A549 (cell line): ENCODE measurements at regions of chr19 and their contacts with region 1.

Region 1: GRCh38 chr19:38647368-38647965 is at the start of gene ACTN4:
- DNase-seq: peak; percentile 99
- ATAC-seq: peak; percentile 65 to 68
- H3K4me3 ChIP-seq: peak within 1 kb of the TSS; percentile 85
- H3K27ac ChIP-seq: peak within 1 kb of the TSS; percentile 87 to 91
- H3K4me1 ChIP-seq: peaks cover 38% of the 10 kb centered on the region
- CTCF ChIP-seq: no peak
- EP300 ChIP-seq: no peak; a peak in 1 of 5 replicates
- POLR2A ChIP-seq: peak; percentile 100
- RAD21 ChIP-seq: peak in 1 of 2 experiments; percentile 50; a peak in 2 of 5 replicates
- polyA plus RNA-seq, gene ACTN4: 605 and 614 TPM in 2 replicates

Region 2: GRCh38 chr19:38618590-38619360 is 28.7 kb before region 1 on chr19 and contains the start of gene EIF3K:
- CTCF ChIA-PET with region 1: interaction called, 7 read pairs
- POLR2A ChIA-PET with region 1: interaction called, 28 read pairs
- DNase-seq: peak; percentile 100
- ATAC-seq: peak; percentile 87 to 93
- H3K4me3 ChIP-seq: peak within 1 kb of the TSS; percentile 86
- H3K27ac ChIP-seq: peak within 1 kb of the TSS; percentile 84 to 87
- H3K4me1 ChIP-seq: peaks cover 14% of the 10 kb centered on the region
- CTCF ChIP-seq: no peak
- EP300 ChIP-seq: no peak
- POLR2A ChIP-seq: peak; percentile 85
- RAD21 ChIP-seq: peak in 1 of 2 experiments; percentile 10; a peak in 1 of 5 replicates
- polyA plus RNA-seq, gene EIF3K: 419 and 491 TPM in 2 replicates

Region 3: DNA sequence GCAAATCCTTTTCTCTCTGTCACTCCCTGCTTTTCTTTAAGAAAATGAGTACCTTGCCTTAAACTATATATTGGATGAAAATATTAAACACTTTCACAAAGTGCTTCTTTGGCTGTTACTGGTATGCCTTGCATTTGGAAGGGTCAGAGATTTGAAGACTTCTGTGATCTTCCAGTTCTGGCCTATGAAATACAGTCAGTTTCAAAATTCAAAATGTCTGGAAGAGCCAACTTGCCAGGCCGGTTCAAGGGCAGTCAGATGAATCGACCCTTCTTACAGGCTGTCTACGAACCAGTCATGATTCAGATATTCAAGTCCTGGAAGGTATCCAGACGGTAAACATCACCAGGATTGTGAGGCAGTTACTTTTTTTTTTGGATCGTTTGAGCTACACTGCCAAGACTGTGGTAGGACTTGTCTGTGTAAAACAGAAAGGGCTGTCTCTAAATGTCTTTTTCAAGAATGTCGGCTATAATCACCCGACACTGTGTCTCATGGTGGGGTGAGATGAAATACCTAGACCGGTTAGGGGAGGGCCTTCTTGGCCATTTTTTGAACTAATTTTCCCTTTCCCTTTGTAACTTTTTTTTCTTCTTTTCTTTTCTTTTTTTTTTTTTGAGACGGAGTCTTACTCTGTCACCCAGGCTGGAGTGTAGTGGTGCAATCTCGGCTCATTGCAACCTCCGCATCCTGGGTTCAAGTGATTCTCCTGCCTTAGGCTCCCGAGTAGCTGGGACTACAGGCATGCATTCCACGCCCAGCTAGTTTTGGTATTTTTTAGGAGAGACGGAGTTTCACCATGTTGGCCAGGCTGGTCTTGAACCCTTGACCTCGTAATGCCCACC is 11.2 kb after region 1 on chr19:
- CTCF ChIA-PET with region 1: interaction called, 30 read pairs
- POLR2A ChIA-PET with region 1: interaction called, 47 read pairs
- DNase-seq: peak; percentile 99
- ATAC-seq: peak; percentile 82 to 88
- H3K4me3 ChIP-seq: peak overlapping the region; percentile 25
- H3K27ac ChIP-seq: peak overlapping the region; percentile 87 to 91
- H3K4me1 ChIP-seq: peaks cover 98% of the 10 kb centered on the region
- CTCF ChIP-seq: no peak
- EP300 ChIP-seq: peak; percentile 65 to 73; a peak in 2 of 5 replicates
- POLR2A ChIP-seq: no peak
- RAD21 ChIP-seq: peak; percentile 30 to 38; a peak in 2 of 5 replicates

Region 4: GRCh38 chr19:38666663-38667511 is 19.4 kb after region 1 on chr19:
- CTCF ChIA-PET with region 1: interaction called, 336 read pairs
- POLR2A ChIA-PET with region 1: interaction called, 30 read pairs
- DNase-seq: peak in 1 of 2 experiments; percentile 87
- ATAC-seq: peak; percentile 19 to 30; a peak in 4 of 6 replicates
- H3K4me3 ChIP-seq: peak overlapping the region; percentile 13; the same call in 2 of the 3 replicates
- H3K27ac ChIP-seq: peak overlapping the region; percentile 75 to 91
- H3K4me1 ChIP-seq: peaks cover 100% of the 10 kb centered on the region
- CTCF ChIP-seq: no peak
- EP300 ChIP-seq: no peak
- POLR2A ChIP-seq: no peak
- RAD21 ChIP-seq: no peak

Region 5: DNA sequence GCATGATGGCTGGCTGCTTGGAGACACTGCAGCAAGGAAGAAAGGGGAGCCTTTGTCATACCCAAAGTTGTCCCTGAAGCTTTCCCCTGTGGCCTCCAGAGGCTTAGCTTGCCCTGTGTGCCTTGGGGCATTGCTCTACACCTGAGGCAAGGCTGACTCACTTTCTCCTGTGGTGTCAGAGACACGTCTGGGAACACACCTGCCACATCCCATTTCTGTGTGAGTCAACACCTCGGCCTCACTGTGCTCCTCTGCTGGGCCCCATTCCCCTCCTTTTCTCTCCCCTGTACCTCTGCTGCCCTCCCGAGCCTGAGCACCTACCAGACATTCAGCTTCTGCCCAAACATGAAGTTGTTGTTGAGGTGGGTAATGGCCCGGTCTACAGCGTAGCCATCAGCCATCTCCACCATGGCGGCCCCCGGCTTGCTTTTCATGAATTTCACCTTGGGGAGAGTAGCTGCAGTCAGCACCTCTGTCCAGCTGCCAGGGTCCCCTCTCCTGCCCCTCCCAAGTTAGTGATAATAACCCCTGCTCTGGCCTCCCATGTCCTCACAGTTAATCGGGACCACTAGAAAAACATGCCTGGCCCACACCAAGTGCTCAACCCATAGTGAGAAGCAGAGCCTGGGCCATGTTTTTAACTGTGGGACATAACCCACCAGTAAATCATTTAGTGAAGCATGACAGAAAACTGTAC is 191.3 kb after region 1 on chr19:
- CTCF ChIA-PET with region 1: no interaction called
- POLR2A ChIA-PET with region 1: interaction called, 11 read pairs
- DNase-seq: peak in 1 of 2 experiments; percentile 62
- ATAC-seq: peak; percentile 6 to 8; a peak in 4 of 6 replicates
- H3K4me3 ChIP-seq: no peak overlapping the region
- H3K27ac ChIP-seq: peak overlapping the region; percentile 36 to 76; a peak in 4 of 6 replicates
- H3K4me1 ChIP-seq: peaks cover 92% of the 10 kb centered on the region
- CTCF ChIP-seq: no peak
- EP300 ChIP-seq: no peak
- POLR2A ChIP-seq: no peak
- RAD21 ChIP-seq: 0 out of 5 replicates have a peak, but pooled peaks of 1 of the 2 experiments have one; percentile 26

Region 6: DNA sequence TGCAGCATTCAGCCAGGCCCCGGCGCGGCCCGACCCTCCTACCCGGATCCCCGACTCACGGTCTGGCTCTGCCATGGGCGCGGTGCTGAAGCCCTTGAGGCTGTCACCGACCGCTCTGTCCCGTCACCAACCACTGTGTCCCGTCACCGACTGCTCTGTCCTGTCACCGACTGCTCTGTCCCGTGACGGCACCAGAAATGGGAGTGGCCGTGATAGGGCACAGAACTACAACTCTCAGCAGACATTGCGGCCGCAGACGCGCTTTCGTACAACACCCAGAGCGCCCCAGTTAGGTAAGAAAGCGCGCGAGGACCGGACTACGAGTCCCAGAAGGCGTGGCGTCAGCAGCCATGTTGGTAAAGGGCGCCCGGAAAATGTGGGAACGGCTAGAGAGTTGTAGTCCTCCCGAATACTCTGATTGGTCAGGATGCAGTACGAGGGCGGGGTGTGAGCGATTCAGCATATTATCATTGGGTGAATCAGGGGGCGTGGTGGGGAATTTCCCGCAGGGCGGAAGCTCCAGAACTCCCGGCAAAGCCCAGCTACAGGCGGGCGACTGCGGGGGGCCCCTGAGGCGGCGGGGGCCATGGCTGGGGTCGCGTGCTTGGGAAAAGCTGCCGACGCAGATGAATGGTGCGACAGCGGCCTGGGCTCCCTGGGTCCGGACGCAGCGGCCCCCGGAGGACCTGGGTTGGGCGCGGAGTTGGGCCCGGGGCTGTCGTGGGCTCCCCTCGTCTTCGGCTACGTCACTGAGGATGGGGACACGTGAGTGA is 252.2 kb after region 1 on chr19 and contains the starts of genes NFKBIB and SIRT2:
- CTCF ChIA-PET with region 1: no interaction called
- POLR2A ChIA-PET with region 1: interaction called, 12 read pairs
- DNase-seq: peak; percentile 100
- ATAC-seq: peak; percentile 92 to 97
- H3K4me3 ChIP-seq: peak within 1 kb of the TSS; percentile 56
- H3K27ac ChIP-seq: peak within 1 kb of the TSS; percentile 76 to 85
- H3K4me1 ChIP-seq: peaks cover 17% of the 10 kb centered on the region
- CTCF ChIP-seq: no peak
- EP300 ChIP-seq: no peak
- POLR2A ChIP-seq: peak; percentile 63
- RAD21 ChIP-seq: no peak
- polyA plus RNA-seq, gene NFKBIB: 25.6 and 35.0 TPM in 2 replicates
- polyA plus RNA-seq, gene SIRT2: 28.6 and 31.5 TPM in 2 replicates